ENCODE measurements at regions of chr13 and their contacts with region 1.

Region 1: DNA sequence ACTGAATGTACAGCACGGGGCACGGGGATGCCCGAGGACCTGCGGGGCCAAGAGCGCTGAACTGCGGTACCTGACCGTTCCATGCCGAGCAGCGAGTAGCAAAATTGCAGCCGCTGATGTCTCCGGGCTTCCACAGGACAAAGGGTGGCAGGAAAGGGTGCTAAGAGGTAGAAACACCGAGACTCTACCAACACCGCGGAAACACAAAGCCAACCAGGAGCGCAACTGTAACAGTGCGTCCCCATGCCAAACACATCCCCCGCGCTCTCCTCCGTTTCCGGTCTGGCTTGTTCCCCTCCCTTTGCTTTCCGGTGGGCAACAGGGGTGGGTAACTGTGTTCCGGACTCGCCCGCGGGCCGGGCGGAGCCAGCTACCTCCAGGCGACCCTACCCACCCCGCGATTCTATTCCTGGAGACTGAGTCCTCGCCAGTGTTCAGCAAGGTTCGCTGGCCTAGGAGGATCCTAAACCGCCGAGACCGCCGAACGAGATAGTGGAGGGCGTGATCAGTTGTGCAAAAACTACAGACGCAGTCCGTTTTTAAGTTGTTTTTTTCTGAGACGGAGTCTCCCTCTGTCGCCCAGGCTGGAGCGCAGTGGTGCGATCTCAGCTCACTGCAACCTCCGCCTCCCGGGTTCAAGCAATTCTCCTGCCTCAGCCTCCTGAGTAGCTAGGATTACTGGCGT is 34.9 kb upstream of the NEK3 start:
- DNase-seq: peak; percentile 81 to 95 (median 86)
- ATAC-seq: peak; percentile 85
- H3K4me3 ChIP-seq: peak overlapping the region; percentile 76 to 87
- H3K4me3 Mint-ChIP-seq: peak overlapping the region; percentile 98
- H3K27ac ChIP-seq: peak overlapping the region; percentile 64 to 65
- H3K27ac Mint-ChIP-seq: peak overlapping the region; percentile 98
- H3K4me1 ChIP-seq: peaks cover 16% of the 10 kb centered on the region
- H3K4me1 Mint-ChIP-seq: peaks cover 39% of the 10 kb centered on the region
- H3K27me3 ChIP-seq: no peaks in the 10 kb centered on the region
- H3K27me3 Mint-ChIP-seq: no peaks in the 10 kb centered on the region
- CTCF ChIP-seq: no peak

Region 2: DNA sequence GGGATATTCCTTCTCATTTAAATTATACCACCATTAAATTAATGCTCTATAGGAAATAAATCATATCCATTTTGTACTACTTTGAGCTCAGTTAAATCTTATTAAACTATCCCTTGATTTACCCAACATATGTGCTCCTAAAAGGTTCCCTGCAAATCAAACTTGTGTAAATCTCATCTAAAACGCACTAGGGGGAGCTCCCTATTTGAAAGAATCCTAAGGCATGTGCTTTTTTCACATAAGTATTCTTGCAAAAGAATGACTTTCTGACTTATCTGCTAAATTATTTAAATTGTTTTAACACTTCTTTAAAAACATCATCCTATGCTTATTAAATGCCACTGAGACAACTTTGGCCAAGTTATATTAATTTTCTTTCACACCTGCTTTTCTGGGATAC is 749.4 kb before region 1 on chr13:
- CTCF ChIA-PET with region 1: no interaction called
- POLR2A ChIA-PET with region 1: no interaction called
- intact Hi-C with region 1: loop called in 1 of 2 experiments (anchors 5 kb)
- DNase-seq: peak in 2 of 9 experiments; percentile 44 to 58
- ATAC-seq: no peak
- H3K4me3 ChIP-seq: no peak overlapping the region
- H3K4me3 Mint-ChIP-seq: no peak overlapping the region
- H3K27ac ChIP-seq: no peak overlapping the region
- H3K27ac Mint-ChIP-seq: no peak overlapping the region
- H3K4me1 ChIP-seq: peaks cover 7% of the 10 kb centered on the region
- H3K4me1 Mint-ChIP-seq: peaks cover 27% of the 10 kb centered on the region
- H3K27me3 ChIP-seq: no peaks in the 10 kb centered on the region
- H3K27me3 Mint-ChIP-seq: no peaks in the 10 kb centered on the region
- CTCF ChIP-seq: no peak

Region 3: GRCh38 chr13:51814825-51815650 is 379.3 kb before region 1 on chr13:
- CTCF ChIA-PET with region 1: interaction called, 3 read pairs
- POLR2A ChIA-PET with region 1: no interaction called
- intact Hi-C with region 1: loop called in 1 of 2 experiments (anchors 2 kb)
- DNase-seq: peak; percentile 49 to 89 (median 76)
- ATAC-seq: peak; percentile 82
- H3K4me3 ChIP-seq: peak overlapping the region; percentile 12 to 23
- H3K4me3 Mint-ChIP-seq: peak overlapping the region; percentile 70
- H3K27ac ChIP-seq: peak overlapping the region in 1 of 2 experiments; percentile 18
- H3K27ac Mint-ChIP-seq: peak overlapping the region; percentile 92
- H3K4me1 ChIP-seq: peaks cover 63% of the 10 kb centered on the region
- H3K4me1 Mint-ChIP-seq: peaks cover 79% of the 10 kb centered on the region
- H3K27me3 ChIP-seq: no peaks in the 10 kb centered on the region
- H3K27me3 Mint-ChIP-seq: no peaks in the 10 kb centered on the region
- CTCF ChIP-seq: peak; percentile 92

Region 4: GRCh38 chr13:52011632-52012511 is 182.5 kb before region 1 on chr13 and contains the start of gene ALG11:
- CTCF ChIA-PET with region 1: interaction called, 3 read pairs
- POLR2A ChIA-PET with region 1: interaction called, 8 read pairs
- intact Hi-C with region 1: loop called (anchors 1 kb)
- DNase-seq: peak; percentile 98 to 100 (median 99)
- ATAC-seq: peak; percentile 98
- H3K4me3 ChIP-seq: peak within 1 kb of the TSS; percentile 70 to 88
- H3K4me3 Mint-ChIP-seq: peak within 1 kb of the TSS; percentile 99
- H3K27ac ChIP-seq: peak within 1 kb of the TSS; percentile 57 to 75
- H3K27ac Mint-ChIP-seq: peak within 1 kb of the TSS; percentile 95
- H3K4me1 ChIP-seq: peaks cover 15% of the 10 kb centered on the region
- H3K4me1 Mint-ChIP-seq: peaks cover 35% of the 10 kb centered on the region
- H3K27me3 ChIP-seq: no peaks in the 10 kb centered on the region
- H3K27me3 Mint-ChIP-seq: peaks cover 7% of the 10 kb centered on the region
- CTCF ChIP-seq: no peak
- total RNA-seq, gene ALG11: 34.0 to 35.1 TPM

Region 5: DNA sequence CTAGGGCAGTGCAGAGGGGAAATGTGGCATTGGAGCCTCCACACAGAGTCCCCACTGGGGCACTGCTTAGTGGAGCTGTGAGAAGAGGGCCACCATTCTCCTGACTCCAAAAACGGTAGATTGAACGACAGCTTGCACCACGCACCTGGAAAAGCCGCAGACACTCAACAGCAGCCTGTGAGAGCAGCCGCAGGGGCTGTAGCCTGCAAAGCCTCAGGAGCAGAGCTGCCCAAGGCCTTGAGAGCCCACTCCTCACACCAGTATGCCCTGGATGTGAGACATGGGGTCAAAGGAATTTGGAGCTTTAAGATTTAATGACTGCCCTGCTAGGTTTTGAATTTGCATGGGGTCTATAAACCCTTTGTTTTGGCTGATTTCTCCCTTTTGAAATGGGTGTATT is 97.1 kb before region 1 on chr13:
- CTCF ChIA-PET with region 1: no interaction called
- POLR2A ChIA-PET with region 1: no interaction called
- intact Hi-C with region 1: no loop called
- DNase-seq: no peak
- ATAC-seq: no peak
- H3K4me3 ChIP-seq: no peak overlapping the region
- H3K4me3 Mint-ChIP-seq: no peak overlapping the region
- H3K27ac ChIP-seq: no peak overlapping the region
- H3K27ac Mint-ChIP-seq: no peak overlapping the region
- H3K4me1 ChIP-seq: no peaks in the 10 kb centered on the region
- H3K4me1 Mint-ChIP-seq: no peaks in the 10 kb centered on the region
- H3K27me3 ChIP-seq: no peaks in the 10 kb centered on the region
- H3K27me3 Mint-ChIP-seq: peaks cover 2% of the 10 kb centered on the region
- CTCF ChIP-seq: no peak

Region 6: DNA sequence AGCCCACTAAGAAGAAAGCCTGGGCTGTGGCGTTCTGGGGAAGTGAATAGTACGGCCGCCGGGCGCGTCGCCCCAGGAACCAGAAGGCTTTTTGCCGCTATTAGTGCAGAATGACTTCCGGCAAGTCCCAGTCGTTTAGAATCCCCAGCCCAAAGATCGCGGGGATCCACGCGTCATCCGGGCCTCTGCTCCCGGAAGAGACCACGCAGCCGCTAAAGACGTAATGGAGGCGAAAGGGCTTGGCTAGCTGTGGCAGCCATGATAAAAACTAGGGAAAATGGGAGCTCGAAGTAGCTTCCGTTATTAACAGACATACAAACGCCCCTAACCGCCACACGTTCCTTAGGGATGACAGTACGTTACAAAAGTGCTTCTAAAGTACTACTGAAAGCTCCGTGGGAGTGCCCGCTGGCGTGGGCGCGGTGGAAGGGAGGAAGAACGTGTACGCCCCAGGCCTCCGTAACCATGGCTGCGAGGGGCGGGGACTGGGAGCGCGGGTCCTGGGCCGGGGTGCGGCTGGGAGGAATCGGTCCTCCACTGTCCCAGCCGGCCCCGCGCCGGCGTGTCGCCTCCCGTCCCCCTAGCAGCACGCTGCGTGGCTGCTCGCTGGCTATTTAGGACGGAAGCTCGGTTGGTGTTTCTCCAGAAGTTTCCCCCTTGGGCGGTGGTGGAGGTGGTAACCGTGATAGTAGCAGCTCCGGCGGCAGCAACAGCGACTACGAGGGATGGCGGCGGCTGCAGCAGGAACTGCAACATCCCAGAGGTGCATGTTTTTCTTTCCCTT is 458.1 kb after region 1 on chr13 and contains the start of gene SUGT1:
- CTCF ChIA-PET with region 1: no interaction called
- POLR2A ChIA-PET with region 1: no interaction called
- intact Hi-C with region 1: loop called in 1 of 2 experiments (anchors 2 kb)
- DNase-seq: peak; percentile 88 to 98 (median 95)
- ATAC-seq: peak; percentile 92
- H3K4me3 ChIP-seq: peak within 1 kb of the TSS; percentile 70 to 87
- H3K4me3 Mint-ChIP-seq: no peak within 1 kb of the TSS
- H3K27ac ChIP-seq: peak within 1 kb of the TSS; percentile 94 to 96
- H3K27ac Mint-ChIP-seq: no peak within 1 kb of the TSS
- H3K4me1 ChIP-seq: peaks cover 32% of the 10 kb centered on the region
- H3K4me1 Mint-ChIP-seq: peaks cover 7% of the 10 kb centered on the region
- H3K27me3 ChIP-seq: no peaks in the 10 kb centered on the region
- H3K27me3 Mint-ChIP-seq: no peaks in the 10 kb centered on the region
- CTCF ChIP-seq: peak; percentile 68
- total RNA-seq, gene SUGT1: 17.8 to 20.0 TPM